Naive thymus-derived CD4-positive, alpha-beta T cell (primary cell): ENCODE measurements at regions of chr15 and their contacts with region 1.

Region 1: DNA sequence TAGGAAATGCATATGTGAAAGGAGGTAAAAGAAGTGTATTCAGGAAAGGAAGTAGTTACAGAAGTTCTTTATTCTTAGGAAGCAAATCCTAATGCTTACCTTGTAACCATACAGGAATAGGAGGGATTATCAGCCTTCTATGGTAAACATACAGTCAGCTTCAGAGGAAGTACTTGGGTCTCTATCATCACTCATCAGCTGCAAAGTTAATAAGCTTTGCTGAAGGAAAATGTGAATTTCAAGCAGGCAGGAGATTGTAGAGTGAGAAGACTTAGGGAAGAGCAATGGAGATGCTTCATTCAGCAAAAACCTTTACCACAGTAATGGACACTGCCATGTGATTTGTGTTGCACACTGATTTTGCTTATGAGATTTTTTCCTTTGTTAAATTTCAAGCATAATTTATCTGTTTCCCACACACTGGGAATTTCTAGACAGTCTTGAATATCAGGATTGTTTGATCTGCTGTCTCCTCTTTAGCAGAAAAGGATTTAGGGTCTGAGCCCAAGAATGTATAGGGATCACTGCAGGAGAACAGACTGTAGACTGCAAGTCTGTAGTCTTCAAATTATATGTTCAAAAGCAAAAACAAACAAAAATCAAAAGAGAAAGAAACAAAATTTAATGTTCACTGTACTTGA is 150.8 kb downstream of the ZNF609 start:
- DNase-seq: no peak
- ATAC-seq: no peak
- H3K4me3 ChIP-seq: no peak overlapping the region
- H3K4me3 Mint-ChIP-seq: peak overlapping the region in 8 of 10 donors; percentile 1 to 60 (median 41)
- H3K27ac ChIP-seq: no peak overlapping the region
- H3K27ac Mint-ChIP-seq: peak overlapping the region in 8 of 9 donors; percentile 48 to 92 (median 68)
- H3K4me1 ChIP-seq: peaks cover 0 to 23% of the 10 kb centered on the region in 2 donors
- H3K4me1 Mint-ChIP-seq: peaks cover 33 to 64% (median 42%) of the 10 kb centered on the region in 7 donors
- H3K27me3 ChIP-seq: no peaks in the 10 kb centered on the region
- H3K27me3 Mint-ChIP-seq: no peaks in the 10 kb centered on the region

Region 2: DNA sequence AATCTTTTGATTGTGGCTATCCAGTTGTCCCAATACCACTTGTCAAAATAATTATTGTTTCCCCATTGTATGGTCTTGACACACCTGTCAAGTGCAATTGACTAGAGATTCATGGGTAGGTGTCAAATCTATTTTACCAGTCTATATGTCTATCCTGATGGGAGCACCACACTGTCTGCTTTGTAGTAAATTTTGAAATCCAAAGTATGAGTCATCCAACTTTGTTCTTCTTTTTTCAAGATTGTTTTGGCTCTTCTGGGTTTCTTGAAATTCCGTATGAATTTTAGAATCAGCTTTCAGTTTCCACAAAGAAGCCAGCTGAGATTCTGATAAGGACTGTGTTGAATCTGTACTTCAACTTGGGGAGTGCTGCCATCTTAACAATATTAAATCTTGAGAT is 327.2 kb before region 1 on chr15:
- CTCF ChIA-PET with region 1: no interaction called
- POLR2A ChIA-PET with region 1: no interaction called
- intact Hi-C with region 1: no loop called
- DNase-seq: no peak
- ATAC-seq: peak; percentile 54
- H3K4me3 ChIP-seq: no peak overlapping the region
- H3K4me3 Mint-ChIP-seq: no peak overlapping the region
- H3K27ac ChIP-seq: no peak overlapping the region
- H3K27ac Mint-ChIP-seq: no peak overlapping the region
- H3K4me1 ChIP-seq: no peaks in the 10 kb centered on the region
- H3K4me1 Mint-ChIP-seq: peaks cover 4 to 13% (median 11%) of the 10 kb centered on the region in 7 donors
- H3K27me3 ChIP-seq: no peaks in the 10 kb centered on the region
- H3K27me3 Mint-ChIP-seq: no peaks in the 10 kb centered on the region

Region 3: GRCh38 chr15:64629063-64629462 is 17.9 kb after region 1 on chr15:
- CTCF ChIA-PET with region 1: no interaction called
- POLR2A ChIA-PET with region 1: interaction called, 3 read pairs
- intact Hi-C with region 1: loop called in 1 of 2 experiments (anchors 2 kb)
- DNase-seq: no peak
- ATAC-seq: no peak
- H3K4me3 ChIP-seq: no peak overlapping the region
- H3K4me3 Mint-ChIP-seq: peak overlapping the region in 8 of 10 donors; percentile 0 to 62 (median 15)
- H3K27ac ChIP-seq: peak overlapping the region; percentile 23
- H3K27ac Mint-ChIP-seq: peak overlapping the region in 8 of 9 donors; percentile 59 to 95 (median 84)
- H3K4me1 ChIP-seq: peaks cover 31 to 80% of the 10 kb centered on the region in 2 donors
- H3K4me1 Mint-ChIP-seq: peaks cover 49 to 90% (median 66%) of the 10 kb centered on the region in 7 donors
- H3K27me3 ChIP-seq: no peaks in the 10 kb centered on the region
- H3K27me3 Mint-ChIP-seq: no peaks in the 10 kb centered on the region

Region 4: DNA sequence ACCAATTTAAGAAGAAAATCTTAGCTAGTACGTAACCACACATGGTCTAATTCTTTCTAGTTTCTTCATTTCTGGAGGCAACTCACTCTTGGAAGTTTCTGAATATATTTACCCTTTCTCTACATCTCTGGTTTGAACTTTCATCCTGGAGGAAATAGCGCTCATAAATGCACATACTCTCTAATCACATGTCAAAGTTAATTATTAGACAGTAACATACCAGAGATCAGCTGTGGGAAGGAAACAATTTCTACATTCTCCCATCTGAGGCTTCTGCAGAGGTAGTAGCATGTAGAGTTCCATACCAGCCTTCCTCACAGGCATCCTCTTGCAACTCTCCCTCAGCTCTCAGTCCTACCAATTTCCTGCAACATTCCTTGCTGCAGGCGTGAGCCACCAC is 31.7 kb after region 1 on chr15:
- CTCF ChIA-PET with region 1: no interaction called
- POLR2A ChIA-PET with region 1: no interaction called
- intact Hi-C with region 1: no loop called
- DNase-seq: no peak
- ATAC-seq: no peak
- H3K4me3 ChIP-seq: no peak overlapping the region
- H3K4me3 Mint-ChIP-seq: no peak overlapping the region
- H3K27ac ChIP-seq: no peak overlapping the region
- H3K27ac Mint-ChIP-seq: peak overlapping the region in 1 of 9 donors; percentile 17
- H3K4me1 ChIP-seq: peaks cover 22 to 28% of the 10 kb centered on the region in 2 donors
- H3K4me1 Mint-ChIP-seq: peaks cover 27 to 80% (median 55%) of the 10 kb centered on the region in 7 donors
- H3K27me3 ChIP-seq: no peaks in the 10 kb centered on the region
- H3K27me3 Mint-ChIP-seq: no peaks in the 10 kb centered on the region

Region 5: DNA sequence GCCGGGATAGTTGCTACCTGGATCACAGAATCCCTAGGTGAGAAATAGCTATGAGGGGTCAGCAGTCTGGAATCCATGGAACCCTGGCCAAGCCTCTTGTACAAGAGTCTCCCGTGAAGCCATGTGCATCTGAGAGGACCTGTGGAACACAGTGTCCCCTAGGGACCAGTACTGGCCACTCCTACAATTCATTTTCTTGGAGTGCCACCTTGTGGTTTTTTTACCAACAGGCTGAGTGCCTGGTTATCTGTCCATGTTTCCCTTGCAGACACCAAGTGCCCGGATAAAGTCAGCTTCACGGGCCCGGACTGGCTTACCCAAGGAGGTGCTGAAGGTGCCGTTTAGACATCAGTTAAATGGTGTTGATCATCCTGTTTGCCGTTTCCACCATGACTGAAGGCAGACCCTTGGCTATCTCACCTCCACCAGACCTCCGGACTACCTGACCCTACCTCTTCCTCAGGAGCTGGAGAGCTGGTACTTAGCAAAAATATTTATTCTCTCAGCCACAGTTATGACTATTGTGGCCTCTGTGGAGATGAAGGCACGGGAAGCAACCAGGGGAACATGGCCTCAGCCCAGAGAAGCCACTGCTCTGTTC is 70.3 kb after region 1 on chr15:
- CTCF ChIA-PET with region 1: no interaction called
- POLR2A ChIA-PET with region 1: no interaction called
- intact Hi-C with region 1: no loop called
- DNase-seq: no peak
- ATAC-seq: peak; percentile 46
- H3K4me3 ChIP-seq: no peak overlapping the region
- H3K4me3 Mint-ChIP-seq: peak overlapping the region in 1 of 10 donors; percentile 53
- H3K27ac ChIP-seq: no peak overlapping the region
- H3K27ac Mint-ChIP-seq: peak overlapping the region in 6 of 9 donors; percentile 34 to 78 (median 61)
- H3K4me1 ChIP-seq: no peaks in the 10 kb centered on the region
- H3K4me1 Mint-ChIP-seq: peaks cover 0 to 31% (median 4%) of the 10 kb centered on the region in 7 donors
- H3K27me3 ChIP-seq: no peaks in the 10 kb centered on the region
- H3K27me3 Mint-ChIP-seq: no peaks in the 10 kb centered on the region